Colonic mucosa (tissue), 4 donors: ENCODE measurements at regions of chr1 and their contacts with region 1.

Region 1: DNA sequence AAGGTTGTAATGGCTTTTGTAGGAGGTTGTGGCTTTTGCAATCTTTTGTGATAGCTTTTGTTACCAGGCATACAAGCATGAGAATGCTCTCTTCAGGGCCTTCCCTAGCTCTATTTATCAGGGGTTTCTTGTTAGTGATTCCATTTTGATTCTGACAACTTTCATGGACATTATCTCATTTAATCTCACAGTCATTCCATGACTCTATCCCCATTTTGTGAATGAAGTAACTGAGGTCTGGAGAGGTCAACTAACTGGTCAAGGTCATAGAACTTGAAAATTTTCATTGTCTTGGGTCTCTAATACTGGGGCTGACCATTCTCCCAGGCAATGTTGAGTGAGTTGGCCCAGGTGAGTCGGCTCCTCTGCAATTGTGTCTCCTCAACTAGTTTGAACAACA is 11.2 kb upstream of the LAMTOR5 start:
- DNase-seq: no peak
- H3K4me3 ChIP-seq: no peak overlapping the region
- H3K27ac ChIP-seq: no peak overlapping the region
- H3K4me1 ChIP-seq: no peaks in the 10 kb centered on the region
- H3K27me3 ChIP-seq: no peaks in the 10 kb centered on the region
- CTCF ChIP-seq: no peak

Region 2: GRCh38 chr1:110203021-110203661 is 215.6 kb before region 1 on chr1:
- intact Hi-C with region 1: loop called (anchors 5 kb)
- DNase-seq: peak; percentile 84
- H3K4me3 ChIP-seq: no peak overlapping the region
- H3K27ac ChIP-seq: peak overlapping the region; percentile 82
- H3K4me1 ChIP-seq: no peaks in the 10 kb centered on the region
- H3K27me3 ChIP-seq: no peaks in the 10 kb centered on the region
- CTCF ChIP-seq: peak; percentile 93

Region 3: DNA sequence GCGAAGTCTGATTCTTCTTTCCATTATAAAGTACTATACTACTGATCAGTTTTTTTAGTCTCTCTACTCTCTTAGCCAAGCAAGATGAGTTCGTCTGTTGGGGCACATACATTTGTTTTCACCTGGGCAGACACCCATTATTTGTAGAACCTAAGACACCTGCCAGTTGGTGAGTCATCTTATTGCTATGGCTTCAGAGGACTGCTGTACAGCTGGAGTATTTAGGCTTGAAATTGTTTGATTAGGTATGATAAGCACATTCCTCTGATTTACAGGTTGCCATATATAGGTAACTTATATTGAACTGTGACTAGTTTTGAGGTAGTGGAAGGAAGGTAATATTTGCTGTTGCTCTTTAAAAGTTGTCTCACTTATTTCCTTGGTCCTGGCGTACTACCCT is 62.3 kb before region 1 on chr1:
- intact Hi-C with region 1: no loop called
- DNase-seq: no peak
- H3K4me3 ChIP-seq: no peak overlapping the region
- H3K27ac ChIP-seq: peak overlapping the region; percentile 45
- H3K4me1 ChIP-seq: no peaks in the 10 kb centered on the region
- H3K27me3 ChIP-seq: no peaks in the 10 kb centered on the region
- CTCF ChIP-seq: no peak

Region 4: GRCh38 chr1:110840718-110841117 is 422.0 kb after region 1 on chr1:
- intact Hi-C with region 1: no loop called
- DNase-seq: no peak
- H3K4me3 ChIP-seq: no peak overlapping the region
- H3K27ac ChIP-seq: no peak overlapping the region
- H3K4me1 ChIP-seq: no peaks in the 10 kb centered on the region
- H3K27me3 ChIP-seq: no peaks in the 10 kb centered on the region
- CTCF ChIP-seq: no peak